ENCODE measurements at regions of chr1 and their contacts with region 1.

Region 1: DNA sequence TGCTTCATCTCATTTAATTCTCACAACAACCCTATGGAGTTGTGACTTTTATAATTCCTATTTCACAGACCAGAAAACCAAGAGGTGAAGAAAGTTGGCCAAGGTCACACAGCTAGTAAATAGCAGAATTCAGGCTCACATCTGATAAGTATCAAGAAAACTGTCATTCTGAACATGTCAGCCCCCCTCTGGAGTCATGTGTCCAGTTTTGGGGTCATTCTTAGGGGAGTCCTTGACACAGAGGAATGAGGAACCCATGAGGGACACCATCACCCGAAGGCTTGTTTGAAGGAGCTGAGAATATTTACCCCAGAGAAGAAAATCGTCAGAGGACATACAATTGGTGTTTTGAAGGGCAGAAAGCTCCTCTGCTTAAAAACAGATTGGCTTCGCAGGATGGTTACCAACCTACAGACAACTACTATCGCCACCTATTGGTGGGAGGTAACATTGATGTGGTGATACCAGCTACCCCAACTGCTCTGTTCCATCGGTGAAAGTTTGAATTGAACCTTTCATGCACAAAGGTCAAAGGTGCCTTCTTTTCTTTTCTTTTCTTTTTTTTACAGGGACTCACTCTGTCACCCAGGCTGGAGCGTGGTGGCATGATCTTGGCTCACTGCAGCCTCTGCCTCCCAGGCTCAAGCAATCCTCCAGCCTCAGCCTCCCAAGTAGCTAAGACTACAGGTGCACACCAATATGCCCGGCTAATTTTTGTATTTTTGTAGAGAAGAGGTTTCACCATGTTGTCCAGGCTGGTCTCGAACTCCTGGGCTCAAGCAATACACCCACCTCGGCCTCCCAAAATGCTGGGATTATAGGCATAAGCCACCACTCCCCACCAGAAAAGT is 31.3 kb downstream of the NCMAP start:
- DNase-seq: no peak
- ATAC-seq: peak; percentile 88
- H3K4me3 Mint-ChIP-seq: no peak overlapping the region
- H3K27ac Mint-ChIP-seq: no peak overlapping the region
- H3K4me1 Mint-ChIP-seq: peaks cover 5% of the 10 kb centered on the region
- H3K27me3 Mint-ChIP-seq: no peaks in the 10 kb centered on the region
- CTCF ChIP-seq: peak; percentile 71

Region 2: DNA sequence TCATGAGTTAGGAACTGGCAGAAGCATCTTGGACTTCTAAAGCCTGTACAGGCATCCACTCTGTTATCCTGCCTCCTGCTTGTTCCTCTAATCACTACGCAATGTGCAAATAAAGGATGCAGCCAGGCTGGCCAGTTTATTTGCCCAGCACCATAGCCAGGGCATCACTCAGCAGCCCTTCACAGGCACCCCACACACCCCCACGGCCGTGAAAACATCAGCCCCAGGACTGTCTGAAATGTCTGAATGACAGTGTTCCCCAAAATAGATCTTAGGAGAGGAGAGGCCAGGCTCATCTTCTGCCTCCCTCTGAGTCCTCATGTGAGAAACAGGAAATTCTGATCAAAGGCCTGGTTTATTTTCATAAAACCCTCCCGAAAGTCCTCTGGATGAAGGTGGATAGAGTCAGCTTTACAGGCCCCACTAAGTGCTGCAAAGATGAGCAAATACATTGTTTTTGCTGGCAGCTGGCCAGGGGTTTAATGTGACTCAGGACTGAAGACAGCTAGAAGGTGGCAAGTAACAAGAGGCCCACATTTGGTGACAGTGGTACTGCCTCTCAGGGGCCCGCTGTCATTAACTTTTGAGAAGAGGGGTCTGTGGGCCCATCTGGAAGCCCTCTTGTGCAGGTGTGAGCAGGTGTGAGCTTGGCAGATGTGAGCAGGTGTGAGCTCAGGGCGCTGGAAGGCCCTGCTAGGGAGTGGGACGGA is 235.1 kb before region 1 on chr1:
- CTCF ChIA-PET with region 1: no interaction called
- POLR2A ChIA-PET with region 1: no interaction called
- DNase-seq: no peak
- ATAC-seq: no peak
- H3K4me3 Mint-ChIP-seq: no peak overlapping the region
- H3K27ac Mint-ChIP-seq: no peak overlapping the region
- H3K4me1 Mint-ChIP-seq: no peaks in the 10 kb centered on the region
- H3K27me3 Mint-ChIP-seq: no peaks in the 10 kb centered on the region
- CTCF ChIP-seq: no peak

Region 3: DNA sequence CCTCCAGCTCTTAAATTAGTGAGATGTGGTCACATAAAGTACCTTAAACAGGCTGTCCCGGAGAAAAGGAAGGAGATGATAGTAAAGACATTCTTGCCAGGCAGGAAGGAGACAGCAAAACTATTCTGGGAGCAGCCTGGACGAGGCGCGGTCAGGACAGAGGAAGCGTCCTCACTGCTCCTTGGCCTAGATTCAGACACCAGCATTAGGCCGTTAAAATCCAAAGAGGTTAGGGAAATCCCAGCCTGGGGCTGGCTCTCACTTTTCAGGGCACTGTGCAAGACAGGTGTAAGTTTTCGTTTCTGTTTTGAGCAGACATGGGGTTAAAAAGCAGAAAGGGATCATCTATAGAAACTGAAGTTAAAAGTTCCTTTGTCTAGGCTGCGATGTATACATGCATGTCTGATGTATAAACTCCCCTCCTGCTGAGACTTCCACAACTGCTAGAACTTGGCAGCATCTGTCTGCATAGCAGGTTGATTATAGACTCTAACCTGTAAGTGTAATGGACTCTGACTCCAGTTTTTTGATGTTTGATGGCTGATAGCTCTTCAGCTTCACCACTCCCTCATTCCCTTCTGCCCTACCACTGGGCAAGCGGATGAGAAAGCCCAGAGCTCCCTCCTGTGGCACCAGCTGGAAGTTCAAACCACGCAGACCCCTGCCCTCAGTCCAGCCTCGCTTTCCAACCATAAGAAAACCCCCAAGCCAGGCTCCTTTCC is 195.2 kb before region 1 on chr1:
- CTCF ChIA-PET with region 1: interaction called, 22 read pairs
- POLR2A ChIA-PET with region 1: no interaction called
- DNase-seq: peak; percentile 84
- ATAC-seq: peak; percentile 91
- H3K4me3 Mint-ChIP-seq: no peak overlapping the region
- H3K27ac Mint-ChIP-seq: no peak overlapping the region
- H3K4me1 Mint-ChIP-seq: peaks cover 34% of the 10 kb centered on the region
- H3K27me3 Mint-ChIP-seq: no peaks in the 10 kb centered on the region
- CTCF ChIP-seq: peak; percentile 72

Region 4: GRCh38 chr1:24491577-24492360 is 95.4 kb before region 1 on chr1:
- CTCF ChIA-PET with region 1: no interaction called
- POLR2A ChIA-PET with region 1: no interaction called
- DNase-seq: no peak
- ATAC-seq: peak; percentile 76
- H3K4me3 Mint-ChIP-seq: no peak overlapping the region
- H3K27ac Mint-ChIP-seq: no peak overlapping the region
- H3K4me1 Mint-ChIP-seq: peaks cover 5% of the 10 kb centered on the region; the same call in 1 of the 2 replicates
- H3K27me3 Mint-ChIP-seq: peaks cover 7% of the 10 kb centered on the region
- CTCF ChIP-seq: no peak

Region 5: DNA sequence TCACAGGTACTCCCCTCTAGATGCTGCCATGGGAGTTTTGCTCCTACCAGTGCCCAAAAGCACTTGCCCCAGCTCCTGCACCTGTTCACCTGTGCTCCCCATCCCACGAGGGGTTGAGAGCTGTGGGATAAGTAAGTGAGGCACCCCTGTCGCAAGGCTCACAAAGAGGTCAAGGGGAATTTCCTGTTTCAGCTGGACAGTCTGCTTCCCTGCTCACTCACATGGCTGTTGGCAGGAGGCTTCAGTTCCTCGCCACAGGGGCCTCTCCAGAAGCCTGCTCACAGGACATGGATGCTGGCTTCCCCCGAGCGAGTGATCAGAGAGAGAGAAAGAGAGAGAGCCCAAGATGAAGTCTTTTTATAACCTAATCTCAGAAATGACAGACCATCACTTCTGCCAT is 40.0 kb before region 1 on chr1:
- CTCF ChIA-PET with region 1: interaction called, 40 read pairs
- POLR2A ChIA-PET with region 1: no interaction called
- DNase-seq: no peak
- ATAC-seq: no peak
- H3K4me3 Mint-ChIP-seq: no peak overlapping the region
- H3K27ac Mint-ChIP-seq: no peak overlapping the region
- H3K4me1 Mint-ChIP-seq: peaks cover 16% of the 10 kb centered on the region
- H3K27me3 Mint-ChIP-seq: no peaks in the 10 kb centered on the region
- CTCF ChIP-seq: no peak

Region 6: DNA sequence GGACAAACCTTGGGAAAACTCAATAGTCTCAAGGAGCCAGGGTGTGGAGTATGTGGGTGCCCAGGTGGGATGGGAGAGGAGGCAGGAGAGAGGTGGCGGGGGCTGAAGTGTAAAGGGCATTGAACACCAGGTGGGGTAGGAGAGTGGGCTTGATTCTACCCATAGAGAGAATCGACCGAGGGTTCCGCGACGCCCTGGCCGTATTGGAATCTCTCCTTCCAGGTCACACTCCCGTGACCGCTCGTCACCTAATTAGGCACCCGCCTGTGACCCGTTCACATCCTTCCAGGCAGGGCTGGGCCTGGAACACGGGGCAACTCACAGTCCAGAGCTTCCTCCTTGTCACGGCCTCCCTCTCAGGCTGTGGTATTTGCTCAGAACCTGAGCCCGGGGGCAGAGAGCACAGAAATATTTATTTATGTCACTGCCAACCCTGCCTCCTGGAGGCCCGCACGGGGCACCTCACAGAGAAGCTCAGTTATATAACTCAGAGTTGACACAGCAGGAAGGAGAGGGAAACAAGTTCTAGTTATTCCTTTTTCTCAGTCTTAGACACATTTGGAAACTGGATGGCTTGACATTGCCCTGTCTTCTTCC is 19.3 kb before region 1 on chr1:
- CTCF ChIA-PET with region 1: interaction called, 20 read pairs
- POLR2A ChIA-PET with region 1: no interaction called
- DNase-seq: peak; percentile 33
- ATAC-seq: peak; percentile 69
- H3K4me3 Mint-ChIP-seq: no peak overlapping the region
- H3K27ac Mint-ChIP-seq: no peak overlapping the region
- H3K4me1 Mint-ChIP-seq: peaks cover 26% of the 10 kb centered on the region
- H3K27me3 Mint-ChIP-seq: no peaks in the 10 kb centered on the region
- CTCF ChIP-seq: no peak

Region 7: DNA sequence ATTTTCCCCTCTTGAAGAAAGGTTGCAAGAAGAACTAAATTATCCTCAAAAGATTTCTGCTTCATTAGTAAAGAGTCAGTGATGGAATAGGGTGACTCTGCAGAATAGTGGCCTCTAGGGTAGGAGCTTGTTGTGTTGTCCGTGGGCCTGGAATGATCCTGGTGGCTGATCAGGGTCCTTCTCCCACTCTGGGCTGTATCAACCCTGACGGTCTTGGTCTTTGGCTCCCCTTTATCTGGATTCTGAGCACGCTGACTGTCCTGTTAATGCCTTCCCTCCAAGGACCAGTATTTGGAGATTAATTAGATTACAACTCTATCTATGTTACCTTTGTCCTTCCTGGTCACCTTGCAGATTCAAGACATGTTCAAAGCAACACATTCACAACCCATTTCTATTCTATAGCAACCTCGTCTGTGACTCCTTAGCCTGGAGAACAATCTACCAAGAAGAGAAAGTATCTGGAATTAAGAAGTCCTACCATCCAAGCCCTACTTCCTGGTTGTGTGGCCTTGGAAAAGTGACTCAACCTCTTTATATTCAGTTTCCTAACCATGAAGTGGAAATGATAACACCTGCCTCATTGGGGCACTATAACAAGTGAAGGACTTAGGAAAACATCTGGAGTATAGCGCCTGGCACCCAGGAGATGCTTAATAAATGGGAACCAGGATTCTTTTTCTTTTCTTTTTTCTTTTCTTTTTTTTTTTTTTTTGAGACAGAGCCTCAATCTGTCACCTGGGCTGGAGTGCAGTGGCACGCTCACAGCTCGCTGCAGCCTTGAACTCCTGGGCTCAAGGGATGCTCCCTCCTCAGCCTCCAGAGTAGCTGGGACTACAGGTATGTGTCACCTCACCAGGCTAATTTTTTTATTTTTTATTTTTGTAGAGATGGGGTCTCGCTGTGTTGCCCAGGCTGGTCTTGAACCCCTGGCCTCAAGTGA is 19.4 kb after region 1 on chr1:
- CTCF ChIA-PET with region 1: interaction called, 11 read pairs
- POLR2A ChIA-PET with region 1: no interaction called
- DNase-seq: no peak
- ATAC-seq: no peak
- H3K4me3 Mint-ChIP-seq: no peak overlapping the region
- H3K27ac Mint-ChIP-seq: no peak overlapping the region
- H3K4me1 Mint-ChIP-seq: no peaks in the 10 kb centered on the region
- H3K27me3 Mint-ChIP-seq: no peaks in the 10 kb centered on the region; the same call in 1 of the 2 replicates
- CTCF ChIP-seq: no peak